Activated CD4-positive, alpha-beta memory T cell treated with anti-CD3 and anti-CD28 coated beads, Interleukin-2, amount 10 ng/mL, durations not matched to agents 7 days and 5 days (primary cell): ENCODE measurements at regions of chr14 and their contacts with region 1.

Region 1: DNA sequence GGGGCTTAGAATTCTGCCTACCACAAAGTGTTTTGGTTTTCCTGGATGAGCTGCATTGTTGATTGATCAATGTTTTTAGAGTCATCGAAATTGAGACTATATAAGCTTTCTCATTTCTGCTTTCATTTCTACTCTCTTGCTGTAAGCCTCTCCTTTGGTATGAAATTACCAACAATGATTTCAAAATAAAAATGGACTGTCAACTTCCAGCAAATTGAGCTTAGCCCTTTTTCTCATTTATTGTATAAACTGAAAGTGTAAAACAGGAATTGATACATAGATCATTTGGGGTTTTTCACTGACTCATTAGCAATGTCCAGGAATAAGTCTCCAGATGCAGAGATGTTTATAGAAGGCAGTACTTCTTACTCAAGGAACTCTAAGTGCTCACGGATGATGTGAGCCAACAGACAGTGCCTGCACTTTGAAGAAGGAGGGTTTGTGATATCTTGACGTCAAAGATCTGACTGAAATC is 20.0 kb upstream of the PCNX1 start:
- DNase-seq: no peak
- H3K4me3 Mint-ChIP-seq: peak overlapping the region; percentile 68
- H3K27ac Mint-ChIP-seq: peak overlapping the region; percentile 94
- H3K4me1 Mint-ChIP-seq: peaks cover 92% of the 10 kb centered on the region
- H3K27me3 Mint-ChIP-seq: peaks cover 2% of the 10 kb centered on the region

Region 2: GRCh38 chr14:70809543-70810244 is 77.5 kb before region 1 on chr14:
- CTCF ChIA-PET with region 1: interaction called, 8 read pairs
- POLR2A ChIA-PET with region 1: interaction called, 11 read pairs
- DNase-seq: peak; percentile 93
- H3K4me3 Mint-ChIP-seq: no peak overlapping the region
- H3K27ac Mint-ChIP-seq: peak overlapping the region; percentile 63
- H3K4me1 Mint-ChIP-seq: peaks cover 11% of the 10 kb centered on the region
- H3K27me3 Mint-ChIP-seq: peaks cover 10% of the 10 kb centered on the region

Region 3: DNA sequence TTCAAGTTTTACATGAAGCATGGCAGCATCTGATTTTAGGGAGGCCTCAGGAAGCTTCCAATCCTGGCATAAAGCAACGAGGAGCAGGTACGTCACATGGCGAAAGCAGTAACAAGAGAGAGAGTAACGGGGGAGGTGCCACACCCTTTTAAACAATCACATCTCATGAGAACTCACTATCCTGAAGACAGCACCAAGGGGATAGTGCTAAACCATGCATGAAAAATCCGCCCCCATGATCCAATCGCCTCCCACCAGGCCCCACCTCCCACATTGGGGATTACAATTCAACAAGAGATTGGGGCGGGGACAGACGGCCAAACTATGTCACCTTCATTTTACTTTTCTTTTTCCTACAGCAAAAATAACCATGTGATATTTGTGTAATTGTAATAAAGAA is 70.7 kb before region 1 on chr14:
- CTCF ChIA-PET with region 1: interaction called, 32 read pairs
- POLR2A ChIA-PET with region 1: interaction called, 14 read pairs
- DNase-seq: no peak
- H3K4me3 Mint-ChIP-seq: no peak overlapping the region
- H3K27ac Mint-ChIP-seq: no peak overlapping the region
- H3K4me1 Mint-ChIP-seq: peaks cover 10% of the 10 kb centered on the region
- H3K27me3 Mint-ChIP-seq: peaks cover 17% of the 10 kb centered on the region

Region 4: DNA sequence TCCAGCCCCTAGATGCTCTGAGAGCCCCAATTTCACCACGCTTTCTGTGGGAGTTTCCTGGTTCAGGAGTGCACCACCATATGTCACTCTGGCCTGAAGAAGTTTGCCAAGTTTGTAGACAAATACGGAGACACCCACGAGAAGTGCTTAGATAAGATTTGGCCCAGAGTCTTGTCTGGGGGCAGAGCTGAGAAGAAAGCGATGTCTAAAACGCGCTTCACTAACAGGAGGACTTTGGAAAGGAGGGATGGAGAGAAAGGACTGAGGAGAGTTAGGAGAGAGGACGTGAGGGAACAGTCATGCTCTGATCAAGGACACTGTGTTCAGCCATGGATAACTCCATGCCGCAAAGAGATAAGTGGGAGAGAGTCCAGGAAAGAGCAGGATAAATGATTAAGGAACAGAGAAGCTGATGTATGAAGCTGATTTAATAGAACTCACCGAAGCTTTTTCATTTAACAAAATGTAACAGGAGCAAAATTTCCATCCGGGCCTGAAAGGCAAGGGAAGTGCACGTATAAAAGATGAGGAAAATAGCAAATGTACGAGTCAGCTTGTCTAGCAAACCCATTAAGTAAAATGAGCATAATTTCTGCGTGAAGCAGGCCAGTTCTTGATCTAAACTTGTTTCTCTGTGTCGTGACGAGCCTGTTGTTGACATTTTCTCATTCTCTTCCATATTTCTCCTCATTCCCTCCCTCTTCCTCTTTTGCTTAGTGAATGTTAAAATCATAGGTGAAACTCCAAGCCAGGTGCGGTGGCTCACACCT is 54.5 kb before region 1 on chr14:
- CTCF ChIA-PET with region 1: no interaction called
- POLR2A ChIA-PET with region 1: no interaction called
- DNase-seq: no peak
- H3K4me3 Mint-ChIP-seq: no peak overlapping the region
- H3K27ac Mint-ChIP-seq: no peak overlapping the region
- H3K4me1 Mint-ChIP-seq: peaks cover 2% of the 10 kb centered on the region
- H3K27me3 Mint-ChIP-seq: peaks cover 2% of the 10 kb centered on the region

Region 5: GRCh38 chr14:70873627-70874026 is 13.6 kb before region 1 on chr14:
- CTCF ChIA-PET with region 1: interaction called, 4 read pairs
- POLR2A ChIA-PET with region 1: interaction called, 16 read pairs
- DNase-seq: no peak
- H3K4me3 Mint-ChIP-seq: no peak overlapping the region
- H3K27ac Mint-ChIP-seq: no peak overlapping the region
- H3K4me1 Mint-ChIP-seq: peaks cover 25% of the 10 kb centered on the region
- H3K27me3 Mint-ChIP-seq: no peaks in the 10 kb centered on the region

Region 6: GRCh38 chr14:70897464-70897863 is 10.2 kb after region 1 on chr14:
- CTCF ChIA-PET with region 1: interaction called, 5 read pairs
- POLR2A ChIA-PET with region 1: interaction called, 24 read pairs
- DNase-seq: no peak
- H3K4me3 Mint-ChIP-seq: no peak overlapping the region
- H3K27ac Mint-ChIP-seq: no peak overlapping the region
- H3K4me1 Mint-ChIP-seq: peaks cover 59% of the 10 kb centered on the region
- H3K27me3 Mint-ChIP-seq: peaks cover 31% of the 10 kb centered on the region

Region 7: GRCh38 chr14:70955543-70956480 is 68.6 kb after region 1 on chr14:
- CTCF ChIA-PET with region 1: interaction called, 6 read pairs
- POLR2A ChIA-PET with region 1: interaction called, 11 read pairs
- DNase-seq: peak; percentile 53
- H3K4me3 Mint-ChIP-seq: no peak overlapping the region
- H3K27ac Mint-ChIP-seq: no peak overlapping the region
- H3K4me1 Mint-ChIP-seq: peaks cover 20% of the 10 kb centered on the region
- H3K27me3 Mint-ChIP-seq: no peaks in the 10 kb centered on the region